CD4-positive, alpha-beta T cell (primary cell): ENCODE measurements at regions of chr14 and their contacts with region 1.

Region 1: DNA sequence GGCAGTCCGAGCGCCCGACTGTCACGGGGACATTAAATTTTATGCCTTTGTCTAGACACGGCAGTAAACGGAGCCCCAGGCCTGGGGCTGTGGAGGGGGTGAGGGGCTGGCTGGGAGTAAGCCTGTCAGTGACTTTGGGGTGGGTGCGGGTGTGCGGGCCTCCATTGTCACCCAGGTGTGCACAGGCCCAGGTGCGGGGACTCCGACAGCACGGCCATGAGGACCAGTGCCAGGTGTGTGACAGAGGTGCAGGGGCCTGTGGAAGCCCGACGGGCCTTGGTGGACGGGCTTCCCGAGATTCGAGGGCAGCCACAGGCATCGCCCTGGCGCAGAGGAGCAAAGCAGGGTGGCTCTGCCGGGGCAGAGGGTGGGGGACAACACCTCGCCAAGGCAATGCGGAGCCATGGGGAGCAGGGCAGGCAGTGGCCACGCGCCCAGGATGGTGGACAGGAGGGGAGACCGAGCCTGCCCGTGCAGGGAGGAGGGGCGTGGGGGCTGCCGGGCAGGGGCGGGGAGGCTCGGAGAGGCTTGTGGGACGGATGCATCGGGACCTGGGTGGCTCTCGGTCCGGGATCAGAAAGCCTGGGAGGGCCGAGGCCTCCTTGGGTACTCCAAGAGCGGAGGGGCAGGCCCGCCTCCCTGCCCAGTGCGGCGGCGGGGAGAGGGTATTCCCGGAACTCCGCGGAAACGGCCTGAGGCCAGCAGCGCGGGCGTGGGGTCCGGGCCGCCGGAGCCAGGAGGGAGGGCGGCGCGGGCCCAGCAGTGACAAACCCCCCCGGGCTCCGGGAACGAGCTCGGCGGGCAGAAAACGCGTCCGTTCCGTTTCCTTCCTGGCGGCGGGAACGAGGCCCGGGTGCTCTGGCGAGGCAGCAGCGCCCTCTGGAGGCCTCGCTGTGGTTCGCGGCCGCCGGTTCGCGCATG is 1.5 kb downstream of the TMEM121 start:
- DNase-seq: peak; percentile 63 to 92 (median 77)
- ATAC-seq: peak; percentile 65
- H3K4me3 ChIP-seq: peak overlapping the region; percentile 47
- H3K4me3 Mint-ChIP-seq: peak overlapping the region; percentile 87
- H3K27ac ChIP-seq: no peak overlapping the region
- H3K27ac Mint-ChIP-seq: no peak overlapping the region
- H3K4me1 ChIP-seq: peaks cover 39% of the 10 kb centered on the region
- H3K4me1 Mint-ChIP-seq: peaks cover 17% of the 10 kb centered on the region
- H3K27me3 ChIP-seq: peaks cover 19 to 23% of the 10 kb centered on the region in 2 experiments
- H3K27me3 Mint-ChIP-seq: peaks cover 22% of the 10 kb centered on the region
- CTCF ChIP-seq: peak; percentile 69

Region 2: GRCh38 chr14:105203057-105203531 is 324.8 kb before region 1 on chr14:
- CTCF ChIA-PET with region 1: no interaction called
- POLR2A ChIA-PET with region 1: interaction called, 3 read pairs
- intact Hi-C with region 1: loop called in 1 of 2 experiments (anchors 5 kb)
- DNase-seq: peak; percentile 40 to 76 (median 52)
- ATAC-seq: peak; percentile 48
- H3K4me3 ChIP-seq: no peak overlapping the region
- H3K4me3 Mint-ChIP-seq: no peak overlapping the region
- H3K27ac ChIP-seq: no peak overlapping the region
- H3K27ac Mint-ChIP-seq: no peak overlapping the region
- H3K4me1 ChIP-seq: peaks cover 26% of the 10 kb centered on the region
- H3K4me1 Mint-ChIP-seq: peaks cover 9% of the 10 kb centered on the region
- H3K27me3 ChIP-seq: peaks cover 22 to 27% of the 10 kb centered on the region in 2 experiments
- H3K27me3 Mint-ChIP-seq: peaks cover 31% of the 10 kb centered on the region
- CTCF ChIP-seq: peak; percentile 97

Region 3: GRCh38 chr14:105369653-105370040 is 158.3 kb before region 1 on chr14:
- CTCF ChIA-PET with region 1: interaction called, 20 read pairs
- POLR2A ChIA-PET with region 1: interaction called, 6 read pairs
- intact Hi-C with region 1: loop called (anchors 1 kb)
- DNase-seq: no peak
- ATAC-seq: no peak
- H3K4me3 ChIP-seq: no peak overlapping the region
- H3K4me3 Mint-ChIP-seq: no peak overlapping the region
- H3K27ac ChIP-seq: no peak overlapping the region
- H3K27ac Mint-ChIP-seq: no peak overlapping the region
- H3K4me1 ChIP-seq: peaks cover 11% of the 10 kb centered on the region
- H3K4me1 Mint-ChIP-seq: peaks cover 6% of the 10 kb centered on the region
- H3K27me3 ChIP-seq: no peaks in the 10 kb centered on the region
- H3K27me3 Mint-ChIP-seq: no peaks in the 10 kb centered on the region
- CTCF ChIP-seq: no peak

Region 4: DNA sequence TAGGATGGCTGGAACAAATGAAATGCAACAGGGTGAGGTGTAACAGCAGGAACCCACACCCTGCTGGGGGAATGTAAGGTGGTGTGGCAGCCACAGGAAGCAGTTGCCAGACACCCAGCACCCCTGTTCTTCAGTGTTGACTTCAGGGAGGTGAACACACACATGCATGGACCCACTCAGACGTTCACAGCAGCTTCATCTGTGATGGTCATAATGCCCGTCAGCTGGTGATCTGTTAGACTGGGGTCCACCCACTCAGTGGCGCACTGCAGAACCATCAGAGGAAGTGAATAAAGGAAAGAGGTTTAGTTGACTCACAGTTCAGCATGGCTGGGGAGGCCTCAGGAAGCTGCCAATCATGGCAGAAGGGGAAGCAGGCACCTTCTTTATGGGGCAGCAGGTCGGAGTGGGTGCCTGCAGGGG is 152.3 kb before region 1 on chr14:
- CTCF ChIA-PET with region 1: interaction called, 20 read pairs
- POLR2A ChIA-PET with region 1: interaction called, 6 read pairs
- intact Hi-C with region 1: loop called (anchors 1 kb)
- DNase-seq: peak in 4 of 14 experiments; percentile 8 to 53 (median 34)
- ATAC-seq: peak; percentile 16
- H3K4me3 ChIP-seq: no peak overlapping the region
- H3K4me3 Mint-ChIP-seq: no peak overlapping the region
- H3K27ac ChIP-seq: no peak overlapping the region
- H3K27ac Mint-ChIP-seq: no peak overlapping the region
- H3K4me1 ChIP-seq: peaks cover 14% of the 10 kb centered on the region
- H3K4me1 Mint-ChIP-seq: peaks cover 14% of the 10 kb centered on the region
- H3K27me3 ChIP-seq: no peaks in the 10 kb centered on the region
- H3K27me3 Mint-ChIP-seq: no peaks in the 10 kb centered on the region
- CTCF ChIP-seq: no peak

Region 5: DNA sequence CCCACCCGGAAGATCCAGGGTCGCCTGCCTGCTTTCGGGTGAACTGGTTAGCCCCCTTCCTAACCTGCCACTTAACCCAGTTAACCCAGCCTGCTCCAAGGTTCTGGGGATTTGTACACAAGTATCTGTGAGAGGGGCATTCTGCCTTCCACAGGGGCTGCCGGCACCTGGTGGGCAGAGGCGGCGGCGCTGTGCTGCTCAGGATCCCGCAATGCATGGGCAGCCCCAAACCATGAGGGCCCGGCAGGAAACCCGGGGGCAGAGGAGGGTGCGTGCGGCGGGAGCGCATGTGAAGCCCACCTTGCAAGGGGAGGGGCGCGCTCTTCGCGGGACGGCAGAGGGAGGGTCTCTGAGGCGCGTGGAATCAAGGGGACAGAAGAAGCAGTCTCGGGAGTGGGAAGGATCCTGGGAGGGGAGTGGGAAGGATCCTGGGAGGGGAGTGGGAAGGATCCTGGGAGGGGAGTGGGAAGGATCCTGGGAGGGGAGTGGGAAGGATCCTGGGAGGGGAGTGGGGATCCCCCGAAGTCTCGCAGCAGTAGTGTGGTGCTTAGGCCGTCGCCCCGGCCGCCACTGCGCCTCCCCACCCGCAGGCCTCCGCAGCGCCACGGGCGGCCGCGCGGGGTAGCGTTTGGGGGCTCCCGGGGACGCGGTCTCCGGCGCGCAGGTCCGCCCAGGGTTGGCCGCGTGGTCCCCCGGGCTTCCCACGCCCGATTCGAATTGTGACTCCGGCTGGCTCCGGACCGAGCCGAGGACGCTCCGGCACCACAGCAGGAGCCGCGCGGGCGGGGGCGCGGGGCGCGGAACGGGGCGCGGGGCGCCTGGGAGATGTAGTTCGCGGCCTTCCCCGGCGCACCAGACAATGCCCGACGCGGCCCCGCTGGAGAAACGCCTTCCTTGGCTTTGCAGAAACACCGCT is 113.2 kb before region 1 on chr14:
- CTCF ChIA-PET with region 1: no interaction called
- POLR2A ChIA-PET with region 1: no interaction called
- intact Hi-C with region 1: no loop called
- DNase-seq: peak in 13 of 14 experiments; percentile 22 to 83 (median 50)
- ATAC-seq: peak; percentile 83
- H3K4me3 ChIP-seq: peak overlapping the region; percentile 30
- H3K4me3 Mint-ChIP-seq: peak overlapping the region; percentile 83
- H3K27ac ChIP-seq: no peak overlapping the region
- H3K27ac Mint-ChIP-seq: no peak overlapping the region
- H3K4me1 ChIP-seq: peaks cover 36% of the 10 kb centered on the region
- H3K4me1 Mint-ChIP-seq: peaks cover 23% of the 10 kb centered on the region
- H3K27me3 ChIP-seq: peaks cover 23 to 30% of the 10 kb centered on the region in 2 experiments
- H3K27me3 Mint-ChIP-seq: peaks cover 11% of the 10 kb centered on the region
- CTCF ChIP-seq: peak; percentile 82

Region 6: GRCh38 chr14:105448706-105449111 is 79.2 kb before region 1 on chr14:
- CTCF ChIA-PET with region 1: interaction called, 9 read pairs
- POLR2A ChIA-PET with region 1: no interaction called
- intact Hi-C with region 1: loop called in 1 of 2 experiments (anchors 2 kb)
- DNase-seq: peak; percentile 55 to 82 (median 65)
- ATAC-seq: peak; percentile 100
- H3K4me3 ChIP-seq: no peak overlapping the region
- H3K4me3 Mint-ChIP-seq: no peak overlapping the region
- H3K27ac ChIP-seq: no peak overlapping the region
- H3K27ac Mint-ChIP-seq: no peak overlapping the region
- H3K4me1 ChIP-seq: peaks cover 7% of the 10 kb centered on the region
- H3K4me1 Mint-ChIP-seq: no peaks in the 10 kb centered on the region
- H3K27me3 ChIP-seq: no peaks in the 10 kb centered on the region
- H3K27me3 Mint-ChIP-seq: no peaks in the 10 kb centered on the region
- CTCF ChIP-seq: peak; percentile 75